Mammary epithelial cell (primary cell): ENCODE measurements at regions of chr1 and their contacts with region 1.

Region 1: DNA sequence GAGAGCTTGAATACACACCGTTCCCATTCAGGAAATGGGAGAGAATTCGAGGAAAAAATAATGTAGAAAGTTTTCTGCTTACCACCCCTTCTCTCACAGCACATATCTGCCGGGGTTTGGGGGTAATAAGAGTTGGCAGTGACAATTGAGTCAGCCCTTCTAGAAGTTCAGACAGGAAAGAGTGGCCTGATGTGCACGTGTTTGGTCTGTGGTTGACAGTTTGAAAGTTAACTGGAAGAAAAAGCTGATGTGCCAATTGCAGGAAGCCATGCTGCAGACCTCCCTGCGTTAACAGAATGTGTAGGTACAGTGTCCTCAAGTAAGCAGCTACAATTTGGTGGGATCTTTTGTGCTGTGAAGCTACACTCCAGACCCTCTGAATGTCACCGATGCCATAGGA is 50.9 kb downstream of the DHX9 start:
- DNase-seq: no peak
- H3K4me3 ChIP-seq: no peak overlapping the region
- H3K27ac ChIP-seq: no peak overlapping the region
- H3K4me1 ChIP-seq: no peaks in the 10 kb centered on the region
- H3K27me3 ChIP-seq: no peaks in the 10 kb centered on the region
- CTCF ChIP-seq: no peak

Region 2: DNA sequence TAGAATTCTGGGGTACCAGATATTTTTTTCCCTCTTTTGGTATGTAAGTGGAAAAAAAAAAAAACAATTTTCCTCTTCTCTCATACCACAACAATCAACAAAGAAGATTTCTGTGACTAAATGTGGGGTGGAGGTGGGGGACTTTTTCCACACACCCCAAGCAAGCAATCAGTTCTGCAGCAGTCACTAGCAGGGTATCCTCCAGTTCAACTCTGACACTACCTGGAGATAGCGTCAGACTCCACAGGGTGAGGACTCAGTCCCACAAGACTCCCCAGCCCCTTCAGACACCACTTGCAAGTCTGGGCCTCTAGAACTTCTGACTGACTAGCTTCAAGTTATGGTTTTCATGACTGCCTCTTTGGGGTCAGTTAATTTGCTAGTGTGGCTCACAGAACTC is 44.6 kb before region 1 on chr1:
- CTCF ChIA-PET with region 1: no interaction called
- dilution Hi-C with region 1: loop called (anchors 5 kb)
- in situ Hi-C with region 1: no loop called
- intact Hi-C with region 1: loop called (anchors 5 kb)
- DNase-seq: no peak
- H3K4me3 ChIP-seq: no peak overlapping the region
- H3K27ac ChIP-seq: no peak overlapping the region
- H3K4me1 ChIP-seq: peaks cover 15% of the 10 kb centered on the region
- H3K27me3 ChIP-seq: no peaks in the 10 kb centered on the region
- CTCF ChIP-seq: no peak

Region 3: DNA sequence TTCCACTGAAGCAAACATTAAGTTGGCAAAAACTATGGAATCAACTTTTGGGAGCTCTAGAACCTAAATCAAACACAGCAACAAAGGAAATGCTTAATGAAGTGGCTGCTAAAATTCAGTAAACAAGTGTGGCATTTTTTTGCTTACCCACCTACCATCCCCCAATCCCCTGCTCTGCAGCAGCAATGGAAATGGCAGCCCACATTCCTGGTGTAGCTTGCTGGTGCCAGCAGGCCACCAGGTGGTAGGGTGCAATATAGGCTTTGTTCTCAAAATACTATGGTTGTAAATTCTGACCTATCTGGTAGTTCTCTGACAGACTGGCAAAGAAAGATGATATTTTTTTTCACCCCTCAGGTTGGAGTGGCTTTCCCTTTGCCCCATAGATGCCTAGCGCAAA is 20.1 kb after region 1 on chr1:
- CTCF ChIA-PET with region 1: no interaction called
- dilution Hi-C with region 1: no loop called
- in situ Hi-C with region 1: no loop called
- intact Hi-C with region 1: no loop called
- DNase-seq: no peak
- H3K4me3 ChIP-seq: no peak overlapping the region
- H3K27ac ChIP-seq: no peak overlapping the region
- H3K4me1 ChIP-seq: no peaks in the 10 kb centered on the region
- H3K27me3 ChIP-seq: no peaks in the 10 kb centered on the region
- CTCF ChIP-seq: peak in 1 of 2 donors; percentile 15

Region 4: DNA sequence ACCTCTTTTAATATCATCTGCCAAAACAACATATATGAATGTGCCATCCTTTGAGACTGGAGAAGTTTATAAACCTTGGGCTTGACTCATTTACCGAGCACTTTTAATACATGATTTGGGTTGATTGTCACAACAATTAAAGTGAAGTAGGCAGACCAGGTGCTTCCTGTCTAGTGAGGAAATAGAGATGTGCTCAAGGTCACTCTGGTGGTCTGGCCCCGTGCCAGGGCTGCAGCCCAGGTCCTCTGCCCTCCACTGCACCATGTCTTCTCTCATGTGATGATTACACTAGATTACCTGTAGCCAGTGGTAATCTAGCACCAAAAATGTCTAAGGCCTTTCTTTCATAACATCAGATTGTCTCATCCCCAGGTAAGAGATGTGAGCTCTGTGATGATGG is 234.3 kb after region 1 on chr1:
- CTCF ChIA-PET with region 1: no interaction called
- dilution Hi-C with region 1: no loop called
- in situ Hi-C with region 1: no loop called
- intact Hi-C with region 1: loop called (anchors 10 kb)
- DNase-seq: no peak
- H3K4me3 ChIP-seq: no peak overlapping the region
- H3K27ac ChIP-seq: no peak overlapping the region
- H3K4me1 ChIP-seq: no peaks in the 10 kb centered on the region
- H3K27me3 ChIP-seq: no peaks in the 10 kb centered on the region
- CTCF ChIP-seq: no peak